Stomach (tissue), 19 donors: ENCODE measurements at regions of chr18 and their contacts with region 1.

Region 1: GRCh38 chr18:74190086-74190485 is 41.8 kb downstream of the TIMM21 start:
- DNase-seq: peak in 1 of 2 donors; percentile 35
- H3K4me3 ChIP-seq: no peak overlapping the region
- H3K27ac ChIP-seq: no peak overlapping the region
- H3K4me1 ChIP-seq: no peaks in the 10 kb centered on the region
- H3K27me3 ChIP-seq: peaks cover 0 to 32% (median 0%) of the 10 kb centered on the region in 3 donors
- CTCF ChIP-seq: no peak
- EP300 ChIP-seq: no peak
- POLR2A ChIP-seq: no peak

Region 2: DNA sequence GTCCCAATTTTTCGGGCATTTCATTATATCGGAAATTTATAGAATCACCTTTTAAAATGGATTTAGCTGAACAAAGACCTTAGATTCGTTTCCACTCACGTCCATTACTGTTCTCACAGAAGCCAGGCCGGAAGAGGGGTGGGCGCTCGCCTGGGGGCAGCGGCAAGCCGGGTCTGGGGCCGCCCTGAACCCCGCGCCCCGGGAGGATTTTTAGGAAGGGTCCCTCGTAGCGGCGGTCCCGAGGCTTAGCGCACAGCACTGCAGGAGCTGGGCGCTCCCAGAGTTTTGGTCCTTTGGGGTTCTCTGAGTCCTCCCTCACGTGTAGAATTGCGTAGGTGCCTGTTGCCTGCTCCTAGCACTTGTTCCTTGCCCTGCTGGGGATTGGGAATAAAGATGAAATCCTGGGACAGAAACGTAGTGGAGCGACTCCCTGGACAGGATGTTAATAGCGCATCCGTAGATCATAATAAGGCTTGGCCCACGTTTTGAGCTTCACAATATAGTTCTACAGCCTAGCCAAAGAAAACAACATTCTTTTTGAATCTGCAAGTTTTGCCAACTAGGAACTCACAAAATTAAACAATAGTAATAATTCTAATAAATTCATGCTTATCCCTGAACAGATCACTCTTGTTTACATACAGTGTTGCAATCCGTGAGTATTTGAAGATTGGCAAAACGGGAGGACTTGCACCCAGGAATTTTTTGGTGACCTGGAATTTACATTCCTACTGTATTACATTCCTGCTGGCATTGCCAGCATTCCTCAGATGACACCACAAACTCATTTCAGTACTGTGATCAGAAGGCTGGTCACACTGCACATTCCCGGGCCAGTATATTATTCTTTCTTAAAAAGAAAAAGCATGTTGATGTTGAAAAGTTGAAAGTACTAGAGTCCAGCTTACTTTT is 126.4 kb after region 1 on chr18:
- intact Hi-C with region 1: no loop called
- DNase-seq: no peak
- H3K4me3 ChIP-seq: no peak overlapping the region
- H3K27ac ChIP-seq: no peak overlapping the region
- H3K4me1 ChIP-seq: no peaks in the 10 kb centered on the region
- H3K27me3 ChIP-seq: no peaks in the 10 kb centered on the region
- CTCF ChIP-seq: no peak
- EP300 ChIP-seq: no peak
- POLR2A ChIP-seq: no peak

Region 3: GRCh38 chr18:74342416-74343043 is 152.4 kb after region 1 on chr18:
- intact Hi-C with region 1: loop called (anchors 5 kb)
- DNase-seq: peak; percentile 30 to 87
- H3K4me3 ChIP-seq: no peak overlapping the region
- H3K27ac ChIP-seq: no peak overlapping the region
- H3K4me1 ChIP-seq: peaks cover 0 to 8% (median 0%) of the 10 kb centered on the region in 4 donors
- H3K27me3 ChIP-seq: no peaks in the 10 kb centered on the region
- CTCF ChIP-seq: peak in 4 of 7 experiments; percentile 19 to 69 (median 52)
- EP300 ChIP-seq: no peak
- POLR2A ChIP-seq: no peak

Region 4: DNA sequence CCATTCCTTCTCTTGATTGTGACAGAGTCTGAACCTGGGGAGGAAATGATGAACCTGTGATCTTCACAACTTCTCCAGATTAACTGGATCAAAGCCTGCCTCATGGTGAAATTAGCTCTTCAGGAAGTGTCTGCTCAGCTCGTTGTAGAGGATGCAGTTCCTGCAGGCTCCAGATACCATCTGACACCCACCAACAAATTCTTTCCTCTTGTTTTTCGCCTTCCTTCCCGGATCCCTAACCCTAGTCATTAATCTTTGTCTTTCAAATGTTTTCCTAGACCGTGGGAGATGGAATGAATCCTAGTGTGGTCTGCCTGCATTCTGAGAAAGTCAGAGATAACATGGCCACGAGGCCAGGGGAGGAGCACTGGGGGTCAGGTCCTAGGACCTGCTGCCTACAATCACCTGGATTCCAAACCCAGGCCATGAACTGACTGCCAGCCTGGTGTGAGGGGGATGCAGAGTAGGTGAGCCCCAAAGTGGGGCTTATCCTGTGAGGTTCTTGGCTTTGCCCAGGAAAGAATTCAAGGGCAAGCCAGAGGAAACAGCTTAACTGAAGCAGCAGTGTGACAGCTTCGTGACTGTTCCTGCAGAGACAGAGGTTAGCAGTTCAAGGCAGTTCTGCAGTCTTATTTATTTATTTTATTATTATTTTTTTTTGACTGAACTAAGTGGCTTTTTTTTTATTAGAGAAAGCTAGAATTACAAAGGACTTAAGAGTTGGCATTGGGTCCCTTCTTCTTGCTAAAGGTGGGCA is 199.3 kb after region 1 on chr18:
- intact Hi-C with region 1: no loop called
- DNase-seq: no peak
- H3K4me3 ChIP-seq: no peak overlapping the region
- H3K27ac ChIP-seq: no peak overlapping the region
- H3K4me1 ChIP-seq: no peaks in the 10 kb centered on the region
- H3K27me3 ChIP-seq: no peaks in the 10 kb centered on the region
- CTCF ChIP-seq: no peak
- EP300 ChIP-seq: no peak
- POLR2A ChIP-seq: no peak